ENCODE measurements at regions of chr6 and their contacts with region 1.

Region 1: GRCh38 chr6:15621203-15622044 is 41.4 kb downstream of the DTNBP1 start:
- DNase-seq: no peak
- H3K4me3 ChIP-seq: no peak overlapping the region
- H3K27ac ChIP-seq: peak overlapping the region; percentile 41 to 69 (median 63)
- H3K4me1 ChIP-seq: peaks cover 31 to 37% (median 33%) of the 10 kb centered on the region in 4 donors
- H3K27me3 ChIP-seq: no peaks in the 10 kb centered on the region
- CTCF ChIP-seq: no peak
- EP300 ChIP-seq: peak; percentile 5
- POLR2A ChIP-seq: no peak

Region 2: GRCh38 chr6:14130435-14131075 is 1490.9 kb before region 1 on chr6:
- intact Hi-C with region 1: loop called (anchors 10 kb)
- DNase-seq: no peak
- H3K4me3 ChIP-seq: no peak overlapping the region
- H3K27ac ChIP-seq: no peak overlapping the region
- H3K4me1 ChIP-seq: peaks cover 9 to 27% (median 26%) of the 10 kb centered on the region in 4 donors
- H3K27me3 ChIP-seq: no peaks in the 10 kb centered on the region
- CTCF ChIP-seq: no peak
- EP300 ChIP-seq: no peak
- POLR2A ChIP-seq: no peak